ENCODE measurements at regions of chr18 and their contacts with region 1.

Region 1: GRCh38 chr18:2104620-2105462 is 466.5 kb downstream of the METTL4 start:
- DNase-seq: peak; percentile 68
- H3K4me3 Mint-ChIP-seq: no peak overlapping the region
- H3K27ac Mint-ChIP-seq: no peak overlapping the region
- H3K4me1 Mint-ChIP-seq: peaks cover 6% of the 10 kb centered on the region
- H3K27me3 Mint-ChIP-seq: no peaks in the 10 kb centered on the region
- CTCF ChIP-seq: peak; percentile 81

Region 2: DNA sequence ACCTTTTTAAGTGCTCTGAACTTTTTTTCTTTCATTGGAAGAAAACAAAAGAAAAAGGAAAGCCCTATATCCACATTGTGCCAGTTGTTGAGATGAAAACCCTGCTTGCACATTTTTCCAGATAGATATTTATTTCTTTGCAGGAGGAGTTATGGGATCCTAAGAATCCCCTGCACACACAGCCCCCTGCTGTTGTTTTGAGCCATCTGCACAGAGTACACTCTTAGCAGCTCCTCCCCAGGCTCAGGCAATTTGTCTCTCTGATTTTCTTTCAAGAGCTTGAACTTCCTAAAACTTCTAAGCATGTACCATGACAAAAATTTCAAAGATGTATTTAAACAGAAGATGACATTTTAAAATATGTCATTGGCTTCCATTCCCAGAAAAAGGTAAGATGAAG is 29.5 kb after region 1 on chr18:
- CTCF ChIA-PET with region 1: interaction called, 15 read pairs
- POLR2A ChIA-PET with region 1: no interaction called
- intact Hi-C with region 1: no loop called
- DNase-seq: no peak
- H3K4me3 Mint-ChIP-seq: no peak overlapping the region
- H3K27ac Mint-ChIP-seq: no peak overlapping the region
- H3K4me1 Mint-ChIP-seq: peaks cover 3% of the 10 kb centered on the region
- H3K27me3 Mint-ChIP-seq: no peaks in the 10 kb centered on the region
- CTCF ChIP-seq: no peak

Region 3: GRCh38 chr18:2240311-2240705 is 135.5 kb after region 1 on chr18:
- CTCF ChIA-PET with region 1: interaction called, 10 read pairs
- POLR2A ChIA-PET with region 1: no interaction called
- intact Hi-C with region 1: no loop called
- DNase-seq: no peak
- H3K4me3 Mint-ChIP-seq: peak overlapping the region; percentile 42
- H3K27ac Mint-ChIP-seq: peak overlapping the region; percentile 78
- H3K4me1 Mint-ChIP-seq: peaks cover 25% of the 10 kb centered on the region
- H3K27me3 Mint-ChIP-seq: no peaks in the 10 kb centered on the region
- CTCF ChIP-seq: no peak

Measured in MCF 10A (cell line).